CD4-positive, alpha-beta T cell (primary cell): ENCODE measurements at regions of chr7 and their contacts with region 1.

Region 1: DNA sequence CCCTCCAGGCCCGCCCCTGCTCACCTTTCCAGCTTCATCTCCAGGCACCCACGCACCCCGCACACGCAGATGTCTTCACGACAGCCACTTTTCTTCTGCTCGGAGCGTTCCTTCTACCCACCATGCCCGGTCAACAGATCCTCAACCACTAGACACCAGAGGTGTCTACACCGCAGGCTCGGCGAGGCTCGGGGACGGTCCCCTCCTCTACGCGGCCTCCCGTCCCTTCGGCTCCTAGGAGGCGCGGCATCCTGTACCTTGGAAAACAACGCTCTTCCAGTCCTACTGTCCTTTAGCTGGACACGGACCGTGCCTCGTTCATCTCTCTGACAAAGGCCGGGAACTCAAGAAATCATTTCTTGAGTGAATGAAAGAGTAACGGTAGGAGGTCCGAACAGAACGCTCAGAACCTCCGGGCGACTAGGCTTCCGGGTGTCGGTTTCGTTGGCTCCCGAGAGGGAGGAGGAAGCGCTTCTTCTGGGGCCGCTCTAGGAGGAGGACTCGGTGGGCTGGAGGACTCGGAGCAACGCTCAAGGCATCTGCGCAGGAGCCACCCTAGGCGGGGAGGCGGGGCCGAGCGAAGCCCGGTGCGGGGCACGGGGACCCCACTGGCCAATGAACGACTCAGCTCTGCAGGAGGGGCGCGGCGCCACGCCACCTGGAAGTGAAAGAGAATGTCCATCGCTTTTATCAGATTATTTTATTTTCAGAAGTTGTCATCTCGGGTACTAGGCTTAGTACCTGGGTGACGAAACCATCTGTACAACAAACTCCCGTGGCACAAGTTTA is 7.2 kb upstream of the FIS1 start:
- DNase-seq: peak; percentile 96 to 100 (median 98)
- ATAC-seq: peak; percentile 97
- H3K4me3 ChIP-seq: peak overlapping the region; percentile 95
- H3K4me3 Mint-ChIP-seq: peak overlapping the region; percentile 98
- H3K27ac ChIP-seq: peak overlapping the region; percentile 75 to 76
- H3K27ac Mint-ChIP-seq: peak overlapping the region; percentile 88
- H3K4me1 ChIP-seq: peaks cover 23% of the 10 kb centered on the region
- H3K4me1 Mint-ChIP-seq: peaks cover 38% of the 10 kb centered on the region
- H3K27me3 ChIP-seq: no peaks in the 10 kb centered on the region
- H3K27me3 Mint-ChIP-seq: peaks cover 5% of the 10 kb centered on the region
- CTCF ChIP-seq: no peak

Region 2: DNA sequence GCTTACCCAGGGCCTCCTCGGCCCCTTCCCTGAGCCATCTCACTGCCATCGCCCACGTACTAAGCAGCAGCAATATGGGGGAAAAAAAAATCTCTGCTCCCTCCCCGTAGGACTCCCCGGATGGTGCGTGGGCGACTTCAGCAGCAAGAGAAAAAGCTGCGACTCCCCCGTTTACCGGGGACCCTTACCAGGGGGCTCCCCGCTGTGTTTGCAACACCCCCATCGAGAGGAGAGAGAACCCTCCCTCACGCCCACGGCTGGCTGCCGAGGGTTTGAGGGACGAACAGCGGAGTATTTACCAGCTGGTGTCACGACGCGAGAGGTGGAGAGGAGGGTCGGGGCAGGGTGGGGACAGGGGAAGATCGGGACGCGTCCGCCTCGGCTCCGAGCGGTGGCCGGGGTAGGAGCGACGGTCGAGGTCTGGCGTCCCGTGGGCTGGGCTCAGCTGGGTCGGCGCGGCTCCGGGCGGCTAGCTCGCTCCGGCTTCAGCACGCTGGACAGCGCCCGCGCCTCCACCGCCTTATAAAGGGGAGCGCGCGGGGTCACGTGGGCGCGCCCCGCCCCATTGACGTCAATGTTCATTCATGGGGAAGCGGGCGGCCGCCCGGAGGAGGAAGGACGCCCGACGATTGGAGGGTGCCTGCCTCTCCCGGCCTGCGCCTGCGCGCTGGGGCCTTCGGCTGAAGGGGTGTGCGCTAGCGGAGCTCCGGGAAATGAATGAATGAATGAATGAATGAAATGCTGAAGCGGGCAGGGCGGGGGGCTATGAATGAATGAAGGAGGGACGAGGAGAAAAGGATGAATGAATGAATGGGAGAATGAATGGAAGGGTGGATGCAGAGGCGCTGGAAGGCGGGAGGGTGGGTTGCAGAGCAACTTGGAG is 86.7 kb before region 1 on chr7 and contains the start of gene VGF:
- CTCF ChIA-PET with region 1: no interaction called
- POLR2A ChIA-PET with region 1: no interaction called
- intact Hi-C with region 1: loop called in 1 of 2 experiments (anchors 5 kb)
- DNase-seq: peak; percentile 85 to 97 (median 92)
- ATAC-seq: peak; percentile 85
- H3K4me3 ChIP-seq: peak within 1 kb of the TSS; percentile 19
- H3K4me3 Mint-ChIP-seq: peak within 1 kb of the TSS; percentile 74
- H3K27ac ChIP-seq: no peak within 1 kb of the TSS
- H3K27ac Mint-ChIP-seq: peak within 1 kb of the TSS; percentile 14
- H3K4me1 ChIP-seq: peaks cover 58% of the 10 kb centered on the region
- H3K4me1 Mint-ChIP-seq: peaks cover 43% of the 10 kb centered on the region
- H3K27me3 ChIP-seq: peaks cover 78 to 83% of the 10 kb centered on the region in 2 experiments
- H3K27me3 Mint-ChIP-seq: peaks cover 80% of the 10 kb centered on the region
- CTCF ChIP-seq: no peak
- total RNA-seq, gene VGF: not detected

Region 3: DNA sequence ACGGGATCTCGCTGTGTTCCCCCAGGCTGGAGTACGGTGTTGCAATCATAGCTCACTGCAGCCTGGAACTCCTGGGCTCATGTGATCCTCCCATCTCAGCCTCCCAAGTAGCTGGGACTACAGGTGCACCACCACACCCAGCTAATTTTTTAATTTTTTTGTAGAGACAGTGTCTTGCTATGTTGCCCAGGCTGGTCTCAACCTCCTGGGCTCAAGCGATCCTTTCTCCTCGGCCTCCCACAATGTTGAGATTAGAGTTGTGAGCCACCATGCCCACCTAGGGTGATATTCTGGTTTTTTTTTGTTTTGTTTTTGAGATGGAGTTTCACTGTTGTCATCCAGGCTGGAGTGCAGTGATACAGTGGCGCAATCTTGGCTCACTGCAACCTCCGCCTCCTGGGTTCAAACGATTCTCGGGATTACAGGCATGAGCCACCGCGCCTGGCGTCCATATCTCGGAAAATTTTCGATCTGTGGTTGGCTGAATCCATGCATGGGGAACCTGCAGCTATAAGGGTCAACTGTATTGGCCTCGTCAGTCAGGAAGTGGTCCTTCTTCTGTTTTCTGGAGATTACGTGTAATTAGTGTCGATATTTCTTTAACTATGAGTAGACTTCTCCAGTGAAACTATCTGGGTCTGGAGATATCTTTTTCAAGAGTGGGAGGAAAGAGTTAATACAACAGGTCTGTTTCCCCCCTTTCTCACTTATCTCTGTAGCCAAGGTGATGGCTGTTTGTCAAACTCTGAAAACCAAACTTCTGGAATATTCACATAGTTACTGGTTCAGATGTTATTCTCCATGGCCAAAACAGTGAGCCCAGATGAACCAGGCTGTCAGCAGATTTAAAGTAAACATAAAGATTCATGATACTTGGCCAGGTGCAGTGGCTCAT is 13.8 kb after region 1 on chr7:
- CTCF ChIA-PET with region 1: no interaction called
- POLR2A ChIA-PET with region 1: no interaction called
- intact Hi-C with region 1: no loop called
- DNase-seq: no peak
- ATAC-seq: no peak
- H3K4me3 ChIP-seq: no peak overlapping the region
- H3K4me3 Mint-ChIP-seq: no peak overlapping the region
- H3K27ac ChIP-seq: no peak overlapping the region
- H3K27ac Mint-ChIP-seq: no peak overlapping the region
- H3K4me1 ChIP-seq: no peaks in the 10 kb centered on the region
- H3K4me1 Mint-ChIP-seq: no peaks in the 10 kb centered on the region
- H3K27me3 ChIP-seq: no peaks in the 10 kb centered on the region
- H3K27me3 Mint-ChIP-seq: peaks cover 17% of the 10 kb centered on the region
- CTCF ChIP-seq: no peak

Region 4: GRCh38 chr7:101321491-101322401 is 69.7 kb after region 1 on chr7 and contains the start of gene IFT22:
- CTCF ChIA-PET with region 1: no interaction called
- POLR2A ChIA-PET with region 1: no interaction called
- intact Hi-C with region 1: loop called in 1 of 2 experiments (anchors 2 kb)
- DNase-seq: peak; percentile 62 to 91 (median 81)
- ATAC-seq: peak; percentile 91
- H3K4me3 ChIP-seq: peak within 1 kb of the TSS; percentile 71
- H3K4me3 Mint-ChIP-seq: peak within 1 kb of the TSS; percentile 92
- H3K27ac ChIP-seq: peak within 1 kb of the TSS in 1 of 2 donors; percentile 58
- H3K27ac Mint-ChIP-seq: peak within 1 kb of the TSS; percentile 76
- H3K4me1 ChIP-seq: peaks cover 17% of the 10 kb centered on the region
- H3K4me1 Mint-ChIP-seq: peaks cover 18% of the 10 kb centered on the region
- H3K27me3 ChIP-seq: no peaks in the 10 kb centered on the region
- H3K27me3 Mint-ChIP-seq: no peaks in the 10 kb centered on the region
- CTCF ChIP-seq: no peak
- total RNA-seq, gene IFT22: 2.7 to 3.3 TPM

Region 5: GRCh38 chr7:101363734-101364374 is 111.8 kb after region 1 on chr7:
- CTCF ChIA-PET with region 1: no interaction called
- POLR2A ChIA-PET with region 1: no interaction called
- intact Hi-C with region 1: no loop called
- DNase-seq: peak; percentile 39 to 85 (median 60)
- ATAC-seq: peak; percentile 90
- H3K4me3 ChIP-seq: peak overlapping the region; percentile 48
- H3K4me3 Mint-ChIP-seq: peak overlapping the region; percentile 60
- H3K27ac ChIP-seq: no peak overlapping the region
- H3K27ac Mint-ChIP-seq: no peak overlapping the region
- H3K4me1 ChIP-seq: peaks cover 14% of the 10 kb centered on the region
- H3K4me1 Mint-ChIP-seq: no peaks in the 10 kb centered on the region
- H3K27me3 ChIP-seq: peaks cover 12 to 13% of the 10 kb centered on the region in 2 experiments
- H3K27me3 Mint-ChIP-seq: peaks cover 42% of the 10 kb centered on the region
- CTCF ChIP-seq: peak; percentile 90